ENCODE measurements at regions of chr12 and their contacts with region 1.

Region 1: GRCh38 chr12:28869197-28869596 is 279.9 kb upstream of the FAR2 start:
- DNase-seq: no peak
- ATAC-seq: no peak
- H3K4me3 ChIP-seq: no peak overlapping the region
- H3K4me3 Mint-ChIP-seq: no peak overlapping the region
- H3K27ac ChIP-seq: no peak overlapping the region
- H3K27ac Mint-ChIP-seq: no peak overlapping the region
- H3K4me1 ChIP-seq: no peaks in the 10 kb centered on the region
- H3K4me1 Mint-ChIP-seq: no peaks in the 10 kb centered on the region
- H3K27me3 ChIP-seq: no peaks in the 10 kb centered on the region
- H3K27me3 Mint-ChIP-seq: peaks cover 0 to 4% of the 10 kb centered on the region in 2 donors

Region 2: GRCh38 chr12:30564394-30564793 is 1695.2 kb after region 1 on chr12:
- CTCF ChIA-PET with region 1: no interaction called
- POLR2A ChIA-PET with region 1: interaction called in 1 of 2 experiments, 12 read pairs
- DNase-seq: no peak
- ATAC-seq: no peak
- H3K4me3 ChIP-seq: no peak overlapping the region
- H3K4me3 Mint-ChIP-seq: no peak overlapping the region
- H3K27ac ChIP-seq: no peak overlapping the region
- H3K27ac Mint-ChIP-seq: no peak overlapping the region
- H3K4me1 ChIP-seq: no peaks in the 10 kb centered on the region
- H3K4me1 Mint-ChIP-seq: no peaks in the 10 kb centered on the region
- H3K27me3 ChIP-seq: no peaks in the 10 kb centered on the region
- H3K27me3 Mint-ChIP-seq: peaks cover 0 to 3% of the 10 kb centered on the region in 2 donors